Heart right ventricle (tissue), 16 donors: ENCODE measurements at regions of chr9 and their contacts with region 1.

Region 1: DNA sequence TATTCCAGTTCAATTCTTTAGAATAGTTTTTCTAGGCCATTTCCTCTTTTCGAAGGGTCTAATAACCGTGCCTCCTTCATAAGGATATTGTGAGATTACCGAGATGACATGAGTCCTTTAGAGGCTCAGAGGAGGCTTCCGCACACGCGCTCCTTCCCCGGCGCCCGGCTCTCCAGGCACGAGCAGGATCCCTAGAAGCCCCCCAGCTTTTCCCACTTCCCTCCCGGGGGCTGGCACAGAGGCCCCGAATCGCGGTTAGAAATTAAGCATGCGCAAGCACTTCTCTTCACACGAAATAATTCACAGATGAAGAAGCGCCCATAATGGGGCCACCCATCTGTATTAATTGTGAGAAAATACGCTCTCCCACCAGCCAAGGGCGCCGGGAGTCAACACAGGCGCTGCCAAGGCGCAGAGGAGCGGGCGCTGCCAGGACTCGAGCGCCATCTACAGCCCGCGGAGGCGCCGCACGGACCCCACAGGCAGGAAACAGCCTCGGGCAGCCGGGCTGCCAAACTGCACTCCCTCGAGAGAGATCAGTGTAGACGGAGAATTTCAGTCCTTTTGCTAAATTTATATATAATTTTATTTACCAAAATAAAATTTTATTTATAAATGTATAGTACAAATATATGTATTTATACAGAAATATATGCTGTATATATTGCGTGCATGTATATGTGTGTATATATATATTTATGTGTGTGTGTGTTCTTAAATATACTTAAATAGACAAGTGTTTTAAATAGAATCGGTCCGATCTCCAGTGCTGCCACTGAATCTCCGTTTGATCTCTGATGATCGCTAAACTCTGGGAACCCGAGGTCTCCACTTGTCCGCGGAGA is 258.1 kb upstream of the NFIL3 start:
- DNase-seq: peak; percentile 68 to 81
- ATAC-seq: peak; percentile 90 to 97 (median 95)
- H3K4me3 ChIP-seq: peak overlapping the region in 4 of 10 donors; percentile 6 to 30 (median 24)
- H3K27ac ChIP-seq: no peak overlapping the region
- H3K4me1 ChIP-seq: peaks cover 0 to 9% (median 0%) of the 10 kb centered on the region in 9 donors
- H3K27me3 ChIP-seq: peaks cover 0 to 21% (median 3%) of the 10 kb centered on the region in 7 donors
- CTCF ChIP-seq: peak; percentile 64 to 94 (median 87)

Region 2: GRCh38 chr9:91089405-91090129 is 592.1 kb before region 1 on chr9:
- intact Hi-C with region 1: loop called in 1 of 10 experiments (anchors 10 kb)
- DNase-seq: peak in 1 of 2 donors; percentile 21
- ATAC-seq: peak; percentile 65 to 85 (median 80)
- H3K4me3 ChIP-seq: no peak overlapping the region
- H3K27ac ChIP-seq: no peak overlapping the region
- H3K4me1 ChIP-seq: peaks cover 0 to 17% (median 0%) of the 10 kb centered on the region in 9 donors
- H3K27me3 ChIP-seq: no peaks in the 10 kb centered on the region
- CTCF ChIP-seq: peak in 7 of 9 donors; percentile 49 to 70 (median 60)

Region 3: DNA sequence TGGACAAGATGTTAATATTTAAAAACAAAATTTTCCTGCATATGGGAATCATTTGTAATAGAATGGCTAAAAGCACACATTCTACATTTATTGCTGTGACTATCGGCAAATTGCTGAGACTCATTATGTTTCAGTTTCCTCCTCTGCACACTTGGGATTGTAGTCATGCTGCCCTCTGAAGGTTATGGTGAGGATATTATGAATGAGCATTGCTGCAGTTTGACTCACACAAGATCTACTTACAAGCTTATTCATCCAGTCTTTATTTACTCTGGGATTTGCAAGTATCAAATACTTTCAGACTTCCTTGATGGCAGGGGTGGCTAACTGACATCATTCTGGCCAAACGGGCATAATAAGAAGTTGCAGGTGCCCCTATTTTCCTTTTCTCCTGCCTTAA is 248.5 kb before region 1 on chr9:
- intact Hi-C with region 1: loop called in 7 of 10 experiments (anchors 5 to 10 kb)
- DNase-seq: no peak
- ATAC-seq: peak in 6 of 8 donors; percentile 62 to 74 (median 68)
- H3K4me3 ChIP-seq: no peak overlapping the region
- H3K27ac ChIP-seq: no peak overlapping the region
- H3K4me1 ChIP-seq: peaks cover 0 to 20% (median 0%) of the 10 kb centered on the region in 9 donors
- H3K27me3 ChIP-seq: no peaks in the 10 kb centered on the region
- CTCF ChIP-seq: peak in 8 of 9 donors; percentile 19 to 70 (median 58)

Region 4: GRCh38 chr9:91740701-91741100 is 59.0 kb after region 1 on chr9:
- intact Hi-C with region 1: loop called in 1 of 10 experiments (anchors 10 kb)
- DNase-seq: no peak
- ATAC-seq: peak in 2 of 8 donors; percentile 34 to 44
- H3K4me3 ChIP-seq: no peak overlapping the region
- H3K27ac ChIP-seq: no peak overlapping the region
- H3K4me1 ChIP-seq: peaks cover 0 to 8% (median 0%) of the 10 kb centered on the region in 9 donors
- H3K27me3 ChIP-seq: peaks cover 0 to 4% (median 0%) of the 10 kb centered on the region in 7 donors
- CTCF ChIP-seq: peak in 4 of 9 donors; percentile 9 to 27 (median 20)

Region 5: GRCh38 chr9:91847581-91848091 is 166.0 kb after region 1 on chr9:
- intact Hi-C with region 1: no loop called
- DNase-seq: no peak
- ATAC-seq: no peak
- H3K4me3 ChIP-seq: no peak overlapping the region
- H3K27ac ChIP-seq: no peak overlapping the region
- H3K4me1 ChIP-seq: peaks cover 0 to 14% (median 3%) of the 10 kb centered on the region in 9 donors
- H3K27me3 ChIP-seq: peaks cover 0 to 15% (median 0%) of the 10 kb centered on the region in 7 donors
- CTCF ChIP-seq: no peak